Activated CD4-positive, alpha-beta T cell treated with anti-CD3 and anti-CD28 coated beads, Interleukin-2, amount 10 ng/mL, durations not matched to agents 24 days and 14 days (primary cell): ENCODE measurements at regions of chr9 and their contacts with region 1.

Region 1: DNA sequence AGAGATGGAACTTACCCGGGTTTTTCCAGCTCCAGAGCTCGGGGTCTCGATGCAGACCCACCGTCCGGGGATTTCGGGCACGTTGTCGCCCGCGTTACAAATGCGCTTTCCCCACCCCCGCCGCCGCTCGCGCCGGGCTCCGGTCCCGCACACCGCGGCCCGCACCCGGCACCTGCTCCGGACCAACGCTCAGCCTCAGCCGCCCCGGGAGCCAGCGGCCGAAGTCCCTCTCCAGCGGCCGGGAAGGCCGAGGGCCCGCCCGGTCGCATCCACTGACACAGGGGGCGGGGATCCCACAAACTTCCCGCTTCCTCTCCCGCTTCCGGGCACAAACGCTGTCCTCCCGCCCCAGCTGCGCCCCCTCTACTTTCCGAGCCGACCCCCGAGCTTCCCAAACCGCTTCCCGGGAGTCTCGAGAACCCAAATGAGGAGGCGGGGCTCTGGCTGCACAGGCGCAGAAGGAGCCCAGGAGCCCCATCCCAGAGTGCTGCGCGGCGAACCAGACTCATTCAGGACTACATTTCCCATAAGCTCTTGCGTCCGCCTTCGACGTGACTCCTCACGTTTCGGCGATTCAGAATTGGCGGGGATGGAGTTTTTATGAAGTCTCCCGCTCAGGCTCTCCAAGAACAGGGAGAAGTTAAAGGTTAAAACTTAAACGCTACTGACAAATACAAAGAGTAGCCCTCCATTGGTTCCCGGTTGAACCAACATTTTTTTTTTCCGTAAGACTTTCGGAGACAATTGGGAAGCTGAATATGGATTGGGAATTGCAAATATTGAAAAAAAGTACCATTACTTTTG is at the start of gene ZNF782:
- DNase-seq: peak; percentile 96
- H3K4me3 Mint-ChIP-seq: peak within 1 kb of the TSS; percentile 100
- H3K27ac Mint-ChIP-seq: peak within 1 kb of the TSS; percentile 99
- H3K4me1 Mint-ChIP-seq: peaks cover 42% of the 10 kb centered on the region
- H3K27me3 Mint-ChIP-seq: peaks cover 21% of the 10 kb centered on the region
- total RNA-seq, gene ZNF782: 4.3 and 5.1 TPM in 2 replicates

Region 2: DNA sequence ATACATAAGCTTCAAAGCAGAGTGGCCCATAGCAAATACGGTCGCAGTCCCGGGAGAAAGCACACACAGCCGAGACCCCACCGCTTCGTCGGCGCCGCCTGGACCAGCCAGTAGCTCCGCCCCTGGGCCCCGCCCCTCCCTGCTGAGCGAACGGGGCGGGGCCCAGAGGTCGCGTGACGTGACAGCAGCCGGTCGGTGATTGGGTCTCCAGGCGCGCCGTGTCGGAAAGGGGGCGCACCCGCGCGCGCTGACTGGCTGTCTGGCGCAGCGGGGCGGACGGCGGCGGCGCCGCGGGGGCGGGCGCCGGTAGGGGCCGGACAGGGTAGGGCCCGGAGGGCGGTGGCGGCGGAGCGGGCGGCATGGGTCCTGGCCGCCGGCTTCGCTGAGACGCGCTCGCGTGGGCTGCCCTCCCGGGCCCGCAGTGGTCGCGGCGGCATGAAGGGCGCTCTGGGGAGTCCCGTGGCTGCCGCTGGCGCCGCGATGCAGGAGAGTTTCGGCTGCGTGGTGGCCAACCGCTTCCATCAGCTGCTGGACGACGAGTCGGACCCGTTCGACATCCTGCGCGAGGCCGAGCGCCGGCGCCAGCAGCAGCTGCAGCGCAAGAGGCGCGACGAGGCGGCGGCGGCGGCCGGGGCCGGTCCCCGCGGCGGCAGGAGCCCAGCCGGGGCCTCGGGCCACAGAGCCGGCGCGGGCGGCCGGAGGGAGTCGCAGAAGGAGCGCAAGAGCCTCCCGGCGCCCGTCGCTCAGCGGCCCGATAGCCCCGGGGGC is 404.2 kb before region 1 on chr9 and contains the start of gene HABP4:
- intact Hi-C with region 1: loop called (anchors 10 kb)
- DNase-seq: peak; percentile 99
- H3K4me3 Mint-ChIP-seq: peak within 1 kb of the TSS; percentile 89
- H3K27ac Mint-ChIP-seq: peak within 1 kb of the TSS; percentile 56
- H3K4me1 Mint-ChIP-seq: peaks cover 18% of the 10 kb centered on the region
- H3K27me3 Mint-ChIP-seq: peaks cover 29% of the 10 kb centered on the region
- total RNA-seq, gene HABP4: 8.8 and 9.1 TPM in 2 replicates

Region 3: DNA sequence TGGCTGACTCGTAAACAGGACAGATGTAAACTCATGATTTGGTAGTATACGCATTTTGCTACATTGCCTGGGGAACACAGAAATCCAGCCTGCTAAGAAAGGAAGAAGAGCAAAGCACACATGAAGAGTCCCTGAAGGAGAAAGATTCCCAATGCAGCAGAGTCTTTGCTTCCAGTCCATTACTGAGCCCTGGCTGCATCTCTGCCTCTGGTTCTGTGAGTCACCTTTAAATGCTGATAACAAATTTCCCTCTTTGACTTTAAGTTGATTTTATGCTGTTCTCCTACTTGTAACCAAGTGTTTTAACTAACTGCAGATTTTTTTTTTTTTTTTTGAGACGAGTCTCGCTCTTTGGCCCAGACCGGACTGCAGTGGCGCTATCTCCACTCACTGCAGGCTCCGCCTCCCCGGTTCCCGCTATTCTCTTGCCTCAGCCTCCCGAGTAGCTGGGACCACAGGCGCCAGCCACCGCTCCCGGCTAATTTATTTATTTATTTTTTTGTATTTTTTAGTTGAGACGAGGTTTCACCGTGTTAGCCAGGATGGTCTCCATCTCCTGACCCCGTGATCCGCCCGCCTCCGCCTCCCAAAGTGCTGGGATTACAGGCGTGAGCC is 190.7 kb before region 1 on chr9:
- intact Hi-C with region 1: no loop called
- DNase-seq: no peak
- H3K4me3 Mint-ChIP-seq: no peak overlapping the region
- H3K27ac Mint-ChIP-seq: no peak overlapping the region
- H3K4me1 Mint-ChIP-seq: peaks cover 2% of the 10 kb centered on the region
- H3K27me3 Mint-ChIP-seq: peaks cover 5% of the 10 kb centered on the region

Region 4: DNA sequence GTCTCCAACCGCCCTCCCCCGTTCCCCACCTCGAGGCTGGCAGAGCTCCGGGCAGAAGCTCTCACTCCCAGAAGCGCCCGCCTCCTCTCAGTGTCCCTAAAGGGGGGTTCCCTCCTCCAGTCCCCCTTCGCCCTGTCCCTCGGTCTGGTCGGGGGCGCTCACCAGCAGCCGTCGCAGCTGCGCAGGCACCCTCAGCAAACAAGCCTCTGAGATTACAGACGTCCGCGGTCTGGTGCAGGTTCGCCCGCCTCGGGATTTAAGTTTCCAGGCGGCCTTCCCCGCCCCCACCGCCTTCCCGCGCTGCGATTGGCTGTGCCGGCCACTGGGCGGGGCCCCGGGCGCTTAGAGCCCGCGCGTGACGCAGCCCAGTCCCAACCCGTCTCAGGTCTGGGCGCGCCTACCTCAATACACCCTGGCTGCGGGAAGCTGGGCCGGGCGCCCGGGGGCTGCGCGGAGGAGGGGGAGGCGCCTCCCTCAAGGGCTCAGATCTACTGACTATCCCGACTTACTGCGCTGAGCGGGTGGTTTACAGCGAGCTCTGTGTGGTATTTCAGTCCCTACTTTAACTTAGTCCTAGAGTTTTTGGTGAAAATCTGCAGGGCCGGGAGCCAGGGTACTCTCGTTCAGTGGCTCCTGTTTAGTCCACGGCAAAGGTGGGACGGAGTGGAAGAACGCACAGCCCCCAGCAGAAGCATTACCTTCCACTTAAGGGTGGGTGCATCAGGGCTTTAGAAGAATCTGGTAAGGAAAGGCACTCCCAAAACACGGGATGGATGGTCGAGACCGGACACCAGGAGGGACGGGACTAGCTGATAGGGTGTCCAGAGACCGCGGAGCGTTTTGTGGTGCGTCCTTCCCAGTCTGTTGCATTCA is 184.9 kb after region 1 on chr9 and contains the start of gene CTSV:
- intact Hi-C with region 1: loop called (anchors 10 kb)
- DNase-seq: peak; percentile 95
- H3K4me3 Mint-ChIP-seq: peak within 1 kb of the TSS; percentile 85
- H3K27ac Mint-ChIP-seq: no peak within 1 kb of the TSS
- H3K4me1 Mint-ChIP-seq: peaks cover 4% of the 10 kb centered on the region
- H3K27me3 Mint-ChIP-seq: peaks cover 43% of the 10 kb centered on the region
- total RNA-seq, gene CTSV: 0.45 and 0.51 TPM in 2 replicates

Region 5: GRCh38 chr9:97220894-97221477 is 366.7 kb after region 1 on chr9:
- intact Hi-C with region 1: loop called (anchors 5 kb)
- DNase-seq: no peak
- H3K4me3 Mint-ChIP-seq: peak overlapping the region; percentile 76
- H3K27ac Mint-ChIP-seq: peak overlapping the region; percentile 34
- H3K4me1 Mint-ChIP-seq: peaks cover 4% of the 10 kb centered on the region
- H3K27me3 Mint-ChIP-seq: peaks cover 65% of the 10 kb centered on the region

Region 6: GRCh38 chr9:97598461-97599288 is 744.4 kb after region 1 on chr9:
- intact Hi-C with region 1: loop called (anchors 5 kb)
- DNase-seq: peak; percentile 93
- H3K4me3 Mint-ChIP-seq: peak overlapping the region; percentile 38
- H3K27ac Mint-ChIP-seq: no peak overlapping the region
- H3K4me1 Mint-ChIP-seq: peaks cover 8% of the 10 kb centered on the region
- H3K27me3 Mint-ChIP-seq: peaks cover 2% of the 10 kb centered on the region

Region 7: DNA sequence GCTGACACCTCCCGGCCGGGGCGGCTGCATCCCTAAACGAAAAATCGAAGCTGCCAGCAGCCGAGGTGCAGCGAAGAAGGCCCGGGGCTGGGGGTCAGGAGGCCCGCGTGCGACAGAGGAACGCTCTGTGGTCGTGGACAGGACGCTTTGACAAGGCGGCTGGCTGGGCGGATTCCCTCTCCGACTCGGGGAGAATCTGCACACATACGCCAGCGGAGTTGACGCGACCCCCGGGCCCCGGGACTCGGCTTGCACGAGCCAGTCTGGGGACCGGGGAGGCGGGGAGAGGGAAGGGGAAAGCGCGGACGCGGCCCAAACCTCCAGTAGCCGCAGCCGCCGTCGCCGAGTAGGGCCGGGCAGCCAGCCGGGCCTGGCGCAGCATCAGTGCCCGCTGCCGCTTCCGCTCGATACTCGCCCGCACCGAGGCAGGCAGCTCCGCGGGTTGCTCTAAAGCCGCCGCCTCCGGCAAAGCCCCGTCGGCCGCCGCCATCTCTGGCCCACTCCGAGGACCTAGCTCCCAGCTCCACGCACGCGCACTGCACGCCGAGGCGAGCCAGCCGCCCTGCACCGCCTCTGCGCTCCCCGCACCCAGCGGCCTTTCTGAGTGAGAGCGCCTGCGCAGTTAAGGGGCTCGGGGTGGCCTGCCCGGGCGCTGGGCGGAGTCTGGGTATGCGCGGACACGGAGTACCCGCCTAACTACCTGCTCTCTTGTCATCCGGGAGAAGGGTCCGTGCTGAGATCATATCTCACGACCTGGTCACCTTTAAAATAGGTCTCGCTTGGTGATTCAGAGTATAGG is 842.7 kb after region 1 on chr9 and contains the start of gene XPA:
- intact Hi-C with region 1: loop called (anchors 10 kb)
- DNase-seq: peak; percentile 99
- H3K4me3 Mint-ChIP-seq: peak within 1 kb of the TSS; percentile 91
- H3K27ac Mint-ChIP-seq: peak within 1 kb of the TSS; percentile 89
- H3K4me1 Mint-ChIP-seq: peaks cover 47% of the 10 kb centered on the region
- H3K27me3 Mint-ChIP-seq: no peaks in the 10 kb centered on the region
- total RNA-seq, gene XPA: 8.9 and 12.0 TPM in 2 replicates